CD8-positive, alpha-beta T cell (primary cell): ENCODE measurements at regions of chr9 and their contacts with region 1.

Region 1: GRCh38 chr9:2158111-2158610 is 143.0 kb downstream of the SMARCA2 start:
- DNase-seq: peak in 8 of 9 experiments; percentile 3 to 73 (median 47)
- ATAC-seq: peak; percentile 84
- H3K4me3 ChIP-seq: peak overlapping the region; percentile 42 to 53
- H3K4me3 Mint-ChIP-seq: peak overlapping the region; percentile 82
- H3K27ac ChIP-seq: peak overlapping the region in 1 of 2 experiments; percentile 42
- H3K27ac Mint-ChIP-seq: peak overlapping the region; percentile 78
- H3K4me1 ChIP-seq: peaks cover 31% of the 10 kb centered on the region
- H3K4me1 Mint-ChIP-seq: peaks cover 74% of the 10 kb centered on the region
- H3K27me3 ChIP-seq: no peaks in the 10 kb centered on the region
- H3K27me3 Mint-ChIP-seq: no peaks in the 10 kb centered on the region
- CTCF ChIP-seq: no peak

Region 2: GRCh38 chr9:2023532-2023931 is 134.6 kb before region 1 on chr9:
- CTCF ChIA-PET with region 1: no interaction called
- POLR2A ChIA-PET with region 1: no interaction called
- intact Hi-C with region 1: loop called in 1 of 2 experiments (anchors 5 kb)
- DNase-seq: no peak
- ATAC-seq: no peak
- H3K4me3 ChIP-seq: no peak overlapping the region
- H3K4me3 Mint-ChIP-seq: peak overlapping the region; percentile 67
- H3K27ac ChIP-seq: peak overlapping the region in 1 of 2 experiments; percentile 67
- H3K27ac Mint-ChIP-seq: peak overlapping the region; percentile 88
- H3K4me1 ChIP-seq: peaks cover 96% of the 10 kb centered on the region
- H3K4me1 Mint-ChIP-seq: peaks cover 95% of the 10 kb centered on the region
- H3K27me3 ChIP-seq: no peaks in the 10 kb centered on the region
- H3K27me3 Mint-ChIP-seq: no peaks in the 10 kb centered on the region
- CTCF ChIP-seq: no peak

Region 3: GRCh38 chr9:2837915-2838314 is 679.8 kb after region 1 on chr9:
- CTCF ChIA-PET with region 1: no interaction called
- POLR2A ChIA-PET with region 1: no interaction called
- intact Hi-C with region 1: loop called in 1 of 2 experiments (anchors 5 kb)
- DNase-seq: peak in 1 of 9 experiments; percentile 8
- ATAC-seq: no peak
- H3K4me3 ChIP-seq: no peak overlapping the region
- H3K4me3 Mint-ChIP-seq: no peak overlapping the region
- H3K27ac ChIP-seq: no peak overlapping the region
- H3K27ac Mint-ChIP-seq: peak overlapping the region; percentile 12
- H3K4me1 ChIP-seq: peaks cover 18% of the 10 kb centered on the region
- H3K4me1 Mint-ChIP-seq: peaks cover 23% of the 10 kb centered on the region
- H3K27me3 ChIP-seq: no peaks in the 10 kb centered on the region
- H3K27me3 Mint-ChIP-seq: no peaks in the 10 kb centered on the region
- CTCF ChIP-seq: no peak